Transverse colon (tissue), 4 donors: ENCODE measurements at regions of chr7 and their contacts with region 1.

Region 1: GRCh38 chr7:3146571-3147226 is 103.0 kb upstream of the CARD11 start:
- DNase-seq: no peak
- H3K4me3 ChIP-seq: no peak overlapping the region
- H3K27ac ChIP-seq: no peak overlapping the region
- H3K4me1 ChIP-seq: no peaks in the 10 kb centered on the region
- H3K27me3 ChIP-seq: peaks cover 20% of the 10 kb centered on the region
- CTCF ChIP-seq: no peak
- EP300 ChIP-seq: no peak
- POLR2A ChIP-seq: no peak

Region 2: GRCh38 chr7:2460188-2460587 is 686.5 kb before region 1 on chr7:
- in situ Hi-C with region 1: no loop called
- intact Hi-C with region 1: no loop called
- DNase-seq: no peak
- H3K4me3 ChIP-seq: no peak overlapping the region
- H3K27ac ChIP-seq: no peak overlapping the region
- H3K4me1 ChIP-seq: no peaks in the 10 kb centered on the region
- H3K27me3 ChIP-seq: no peaks in the 10 kb centered on the region
- CTCF ChIP-seq: no peak
- EP300 ChIP-seq: no peak
- POLR2A ChIP-seq: no peak

Region 3: DNA sequence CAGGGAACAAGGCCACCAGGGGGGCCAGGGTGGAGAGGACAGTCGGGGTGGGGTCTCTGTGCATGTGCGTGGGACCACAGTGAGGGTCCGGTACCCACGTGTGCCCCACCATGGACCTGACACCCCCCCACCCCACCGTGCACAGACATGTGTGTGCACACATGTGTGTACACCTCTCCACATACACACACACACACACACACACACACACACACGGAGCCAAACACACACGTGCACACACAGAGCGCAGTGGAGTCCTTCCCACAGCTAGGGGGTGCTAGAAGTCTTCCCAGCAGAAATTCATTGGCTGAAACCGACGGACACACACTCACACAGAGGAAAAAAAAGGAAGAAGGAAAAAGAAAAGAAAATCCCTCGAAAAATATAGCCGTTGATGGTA is 259.8 kb before region 1 on chr7:
- in situ Hi-C with region 1: loop called in 2 of 4 experiments (anchors 10 to 25 kb)
- intact Hi-C with region 1: no loop called
- DNase-seq: peak; percentile 45
- H3K4me3 ChIP-seq: no peak overlapping the region
- H3K27ac ChIP-seq: no peak overlapping the region
- H3K4me1 ChIP-seq: peaks cover 0 to 18% (median 9%) of the 10 kb centered on the region in 4 donors
- H3K27me3 ChIP-seq: peaks cover 28% of the 10 kb centered on the region
- CTCF ChIP-seq: peak; percentile 53 to 82 (median 64)
- EP300 ChIP-seq: no peak
- POLR2A ChIP-seq: no peak

Region 4: GRCh38 chr7:2894118-2894940 is 252.4 kb before region 1 on chr7:
- in situ Hi-C with region 1: loop called in 2 of 4 experiments (anchors 10 to 25 kb)
- intact Hi-C with region 1: no loop called
- DNase-seq: peak; percentile 55
- H3K4me3 ChIP-seq: no peak overlapping the region
- H3K27ac ChIP-seq: peak overlapping the region in 1 of 4 donors; percentile 12
- H3K4me1 ChIP-seq: no peaks in the 10 kb centered on the region
- H3K27me3 ChIP-seq: peaks cover 16% of the 10 kb centered on the region
- CTCF ChIP-seq: no peak
- EP300 ChIP-seq: no peak
- POLR2A ChIP-seq: no peak

Region 5: DNA sequence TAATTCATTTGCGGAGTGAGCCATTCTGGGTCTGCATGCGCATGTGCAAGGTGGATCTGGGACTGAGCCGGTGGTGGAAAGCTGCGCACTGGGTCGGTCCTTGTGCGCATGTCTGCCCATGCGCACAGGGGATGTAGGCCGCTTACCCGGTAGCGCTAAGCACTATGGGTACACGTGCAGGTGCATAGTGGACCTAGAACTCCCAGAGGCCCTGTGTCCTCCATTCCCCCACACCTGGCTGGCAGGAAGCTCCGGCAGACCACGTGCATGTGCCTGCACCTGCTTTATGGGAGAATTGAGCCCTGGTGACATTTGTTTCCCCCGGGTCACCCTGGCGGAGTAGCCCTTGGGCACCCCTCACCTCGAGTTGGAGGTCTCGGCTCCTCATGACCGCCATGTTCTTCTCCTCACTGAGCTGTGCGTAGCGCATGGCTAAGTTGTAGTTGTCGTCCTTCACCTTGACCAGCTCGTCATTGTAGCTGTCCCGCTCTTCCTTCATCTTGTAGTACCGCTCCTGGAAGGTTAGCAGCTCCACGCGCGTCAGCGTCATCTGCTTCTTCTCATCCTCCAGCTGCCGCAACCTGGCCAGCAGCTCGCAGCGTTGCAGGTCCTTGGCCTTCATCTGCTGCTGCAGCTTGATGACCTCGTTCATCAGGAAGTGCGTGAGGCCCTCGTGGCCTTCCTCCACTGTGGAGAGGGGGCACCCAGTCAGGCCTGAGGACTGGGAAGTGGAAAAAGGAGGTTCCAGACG is 202.7 kb before region 1 on chr7:
- in situ Hi-C with region 1: no loop called
- intact Hi-C with region 1: no loop called
- DNase-seq: no peak
- H3K4me3 ChIP-seq: no peak overlapping the region
- H3K27ac ChIP-seq: no peak overlapping the region
- H3K4me1 ChIP-seq: no peaks in the 10 kb centered on the region
- H3K27me3 ChIP-seq: no peaks in the 10 kb centered on the region
- CTCF ChIP-seq: no peak
- EP300 ChIP-seq: no peak
- POLR2A ChIP-seq: no peak